ENCODE measurements at regions of chr20 and their contacts with region 1.

Region 1: GRCh38 chr20:37282556-37282955 is 6.9 kb upstream of the MANBAL start:
- DNase-seq: no peak
- H3K4me3 ChIP-seq: no peak overlapping the region
- H3K27me3 ChIP-seq: no peaks in the 10 kb centered on the region; the same call in 1 of the 2 replicates
- CTCF ChIP-seq: peak; percentile 71

Region 2: GRCh38 chr20:36491901-36492617 is 790.5 kb before region 1 on chr20:
- CTCF ChIA-PET with region 1: no interaction called
- POLR2A ChIA-PET with region 1: no interaction called
- DNase-seq: no peak
- H3K4me3 ChIP-seq: no peak overlapping the region
- H3K27me3 ChIP-seq: no peaks in the 10 kb centered on the region
- CTCF ChIP-seq: no peak

Region 3: GRCh38 chr20:37185686-37186085 is 96.9 kb before region 1 on chr20:
- CTCF ChIA-PET with region 1: no interaction called
- POLR2A ChIA-PET with region 1: no interaction called
- DNase-seq: no peak
- H3K4me3 ChIP-seq: no peak overlapping the region
- H3K27me3 ChIP-seq: no peaks in the 10 kb centered on the region
- CTCF ChIP-seq: no peak

Region 4: GRCh38 chr20:37223053-37223452 is 59.5 kb before region 1 on chr20:
- CTCF ChIA-PET with region 1: no interaction called
- POLR2A ChIA-PET with region 1: no interaction called
- DNase-seq: peak; percentile 47
- H3K4me3 ChIP-seq: no peak overlapping the region
- H3K27me3 ChIP-seq: no peaks in the 10 kb centered on the region
- CTCF ChIP-seq: no peak

Region 5: DNA sequence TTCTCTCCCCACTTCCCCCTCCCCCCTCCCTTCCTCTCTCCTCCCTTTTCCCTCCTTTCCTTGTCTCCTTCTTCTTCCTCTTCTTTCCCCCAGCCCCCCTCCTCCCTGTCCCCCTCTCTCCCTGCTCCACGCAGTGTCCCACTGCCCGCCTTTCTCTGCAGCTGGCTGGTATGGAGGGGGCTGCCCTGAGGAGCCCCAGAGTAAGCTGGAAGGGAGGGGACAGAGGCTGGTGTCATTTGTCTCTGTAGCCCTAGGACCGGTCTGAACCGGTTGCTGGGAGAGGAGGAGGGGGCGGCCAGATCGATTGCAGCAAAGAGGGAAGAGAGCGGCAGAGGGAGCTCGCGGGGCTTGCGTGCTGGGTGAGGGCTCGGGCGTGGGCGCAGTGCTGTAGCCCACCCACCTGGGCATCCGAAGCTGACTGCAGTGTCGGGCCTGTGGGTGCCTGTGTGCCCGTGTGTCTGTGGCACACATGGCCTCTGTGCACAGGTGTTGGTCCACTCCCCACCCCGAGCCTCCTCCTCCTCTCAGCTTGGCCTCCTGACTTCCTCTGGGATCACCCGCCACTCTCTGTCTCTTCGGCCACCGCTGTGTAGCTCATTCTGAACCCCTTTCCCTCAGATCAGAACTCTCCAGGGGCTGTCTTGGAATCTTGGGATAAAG is 114.0 kb after region 1 on chr20:
- CTCF ChIA-PET with region 1: interaction called, 173 read pairs
- POLR2A ChIA-PET with region 1: no interaction called
- DNase-seq: no peak
- H3K4me3 ChIP-seq: no peak overlapping the region
- H3K27me3 ChIP-seq: no peaks in the 10 kb centered on the region
- CTCF ChIP-seq: no peak